ENCODE measurements at regions of chr6 and their contacts with region 1.

Region 1: GRCh38 chr6:3742426-3743344 is 8.8 kb downstream of the PXDC1 start:
- DNase-seq: peak; percentile 80 to 99 (median 91)
- ATAC-seq: peak; percentile 92 to 98 (median 95)
- H3K4me3 ChIP-seq: no peak overlapping the region
- H3K27ac ChIP-seq: peak overlapping the region in 3 of 4 donors; percentile 11 to 48 (median 20)
- H3K4me1 ChIP-seq: peaks cover 0 to 5% (median 0%) of the 10 kb centered on the region in 3 donors
- H3K27me3 ChIP-seq: no peaks in the 10 kb centered on the region
- CTCF ChIP-seq: peak; percentile 87 to 95 (median 92)

Region 2: GRCh38 chr6:3887150-3887700 is 144.5 kb after region 1 on chr6:
- intact Hi-C with region 1: loop called in 1 of 3 experiments (anchors 10 kb)
- DNase-seq: no peak
- ATAC-seq: peak in 3 of 4 donors; percentile 23 to 46 (median 37)
- H3K4me3 ChIP-seq: no peak overlapping the region
- H3K27ac ChIP-seq: no peak overlapping the region
- H3K4me1 ChIP-seq: peaks cover 0 to 9% (median 0%) of the 10 kb centered on the region in 3 donors
- H3K27me3 ChIP-seq: no peaks in the 10 kb centered on the region
- CTCF ChIP-seq: peak in 1 of 4 donors; percentile 17

Region 3: GRCh38 chr6:3939964-3940363 is 197.3 kb after region 1 on chr6:
- intact Hi-C with region 1: loop called in 1 of 3 experiments (anchors 5 kb)
- DNase-seq: no peak
- ATAC-seq: no peak
- H3K4me3 ChIP-seq: no peak overlapping the region
- H3K27ac ChIP-seq: no peak overlapping the region
- H3K4me1 ChIP-seq: no peaks in the 10 kb centered on the region
- H3K27me3 ChIP-seq: no peaks in the 10 kb centered on the region
- CTCF ChIP-seq: no peak

Region 4: DNA sequence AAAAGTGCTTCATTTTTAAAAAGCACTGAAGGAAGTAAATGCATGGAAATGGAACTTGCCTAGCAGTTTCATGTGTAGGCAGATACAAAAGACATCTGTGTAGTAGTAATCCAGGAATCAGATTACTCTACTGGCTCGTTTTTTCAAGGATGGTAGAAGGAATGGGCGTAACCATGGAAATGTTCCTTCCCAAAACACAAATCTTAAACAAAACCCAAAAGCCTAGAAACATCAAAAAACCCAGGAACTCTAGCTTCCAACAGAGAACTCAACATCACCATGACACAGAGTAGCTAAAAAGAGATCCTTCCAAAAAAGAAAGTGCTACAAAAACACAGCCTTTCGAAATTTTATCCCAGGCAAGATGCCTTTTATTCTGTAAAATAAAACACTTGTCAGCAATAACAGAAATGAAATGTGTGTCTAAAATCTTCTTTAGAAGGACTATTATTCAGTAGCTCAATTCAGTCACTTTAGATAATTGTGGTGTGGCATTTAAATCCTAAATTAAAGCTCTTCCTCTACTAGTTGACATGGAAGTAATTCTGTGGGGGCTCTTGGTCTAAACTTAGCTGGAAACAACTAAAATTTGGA is 254.6 kb after region 1 on chr6:
- intact Hi-C with region 1: loop called (anchors 5 to 10 kb)
- DNase-seq: no peak
- ATAC-seq: peak in 1 of 4 donors; percentile 18
- H3K4me3 ChIP-seq: no peak overlapping the region
- H3K27ac ChIP-seq: no peak overlapping the region
- H3K4me1 ChIP-seq: no peaks in the 10 kb centered on the region
- H3K27me3 ChIP-seq: no peaks in the 10 kb centered on the region
- CTCF ChIP-seq: no peak